ENCODE measurements at regions of chr9 and their contacts with region 1.

Region 1: DNA sequence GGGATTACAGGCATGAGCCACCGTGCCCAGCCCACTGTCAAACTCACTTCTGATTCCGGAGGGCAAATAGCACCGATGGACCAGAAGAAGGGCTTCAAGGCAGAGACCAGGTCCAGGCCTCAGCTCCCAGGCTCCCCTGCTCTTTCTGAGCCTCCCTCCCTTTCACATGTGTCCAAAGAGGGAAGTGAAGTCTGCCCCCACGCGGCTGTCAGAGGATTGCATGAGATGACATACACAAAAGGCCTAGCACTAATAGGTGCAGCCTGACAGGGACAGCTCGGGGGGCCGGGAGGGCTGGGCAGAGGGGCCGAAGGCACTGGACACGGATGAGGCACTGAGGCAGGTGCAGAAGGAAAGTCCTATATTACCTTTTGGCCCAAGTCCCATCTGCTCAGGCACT is 16.1 kb downstream of the FBP1 start:
- DNase-seq: peak; percentile 80
- H3K4me3 ChIP-seq: no peak overlapping the region
- H3K27ac ChIP-seq: peak overlapping the region in 1 of 4 donors; percentile 24
- H3K4me1 ChIP-seq: no peaks in the 10 kb centered on the region
- H3K27me3 ChIP-seq: no peaks in the 10 kb centered on the region
- CTCF ChIP-seq: peak; percentile 34 to 78 (median 55)
- EP300 ChIP-seq: no peak
- POLR2A ChIP-seq: no peak

Region 2: DNA sequence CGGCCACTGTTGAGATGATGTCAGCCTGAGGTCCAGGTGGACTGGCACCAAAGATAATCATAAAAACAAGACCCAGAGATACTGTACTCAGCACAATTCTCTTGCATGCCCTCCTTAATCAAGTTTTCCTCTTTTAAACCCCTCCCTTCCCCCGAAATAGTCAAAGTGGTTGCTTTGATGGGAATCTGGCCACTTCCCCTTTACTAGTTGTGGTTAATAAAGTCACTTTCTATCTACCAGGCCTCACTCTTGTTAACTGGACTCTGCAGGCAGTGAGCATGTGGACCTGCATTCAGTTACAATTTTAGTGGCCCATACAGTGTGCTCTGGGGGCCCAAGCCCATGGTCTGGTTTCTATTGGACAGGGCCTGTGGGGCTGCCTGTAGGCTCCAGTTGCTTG is 47.1 kb before region 1 on chr9:
- in situ Hi-C with region 1: no loop called
- intact Hi-C with region 1: loop called (anchors 5 kb)
- DNase-seq: no peak
- H3K4me3 ChIP-seq: no peak overlapping the region
- H3K27ac ChIP-seq: no peak overlapping the region
- H3K4me1 ChIP-seq: peaks cover 0 to 13% (median 3%) of the 10 kb centered on the region in 4 donors
- H3K27me3 ChIP-seq: no peaks in the 10 kb centered on the region
- CTCF ChIP-seq: no peak
- EP300 ChIP-seq: no peak
- POLR2A ChIP-seq: no peak

Region 3: DNA sequence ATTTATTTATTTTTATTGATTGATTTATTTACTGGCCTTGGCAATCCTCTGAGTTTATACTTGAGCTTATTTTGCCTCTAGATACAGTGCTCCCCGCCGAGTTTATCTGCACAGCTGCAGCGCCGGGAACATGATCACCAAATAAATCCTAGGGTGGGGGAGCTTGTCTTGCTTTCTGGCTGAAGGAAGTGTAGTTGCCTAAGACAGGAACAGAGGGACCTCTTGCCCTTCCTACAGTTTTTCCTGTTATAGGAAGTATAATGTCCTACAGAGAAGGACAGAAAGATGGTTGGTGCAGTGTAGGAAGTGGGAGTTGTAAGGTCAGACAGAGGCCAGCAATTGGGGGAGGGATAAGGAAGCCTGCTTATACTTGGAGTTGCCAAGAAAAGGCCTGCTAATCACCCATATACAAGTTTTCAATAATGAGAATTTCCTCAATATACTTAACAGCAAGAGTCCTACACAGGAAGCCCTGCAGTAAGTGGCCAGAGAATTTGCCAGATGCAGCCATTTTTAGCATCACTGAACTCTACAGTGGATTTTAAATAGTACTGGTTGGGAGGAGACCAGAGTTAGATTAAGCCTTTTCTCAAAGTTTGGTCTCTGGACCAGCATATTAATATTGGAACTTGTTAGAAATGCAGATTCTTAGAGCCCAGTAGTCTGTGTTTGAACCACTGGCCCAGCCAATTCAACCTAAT is 111.0 kb after region 1 on chr9:
- in situ Hi-C with region 1: no loop called
- intact Hi-C with region 1: no loop called
- DNase-seq: no peak
- H3K4me3 ChIP-seq: no peak overlapping the region
- H3K27ac ChIP-seq: no peak overlapping the region
- H3K4me1 ChIP-seq: peaks cover 0 to 5% (median 0%) of the 10 kb centered on the region in 4 donors
- H3K27me3 ChIP-seq: no peaks in the 10 kb centered on the region
- CTCF ChIP-seq: no peak
- EP300 ChIP-seq: no peak
- POLR2A ChIP-seq: no peak